ENCODE measurements at regions of chrX and their contacts with region 1.

Region 1: GRCh38 chrX:68699960-68700746 is 52.7 kb downstream of the STARD8 start:
- DNase-seq: no peak
- ATAC-seq: peak; percentile 25

Region 2: DNA sequence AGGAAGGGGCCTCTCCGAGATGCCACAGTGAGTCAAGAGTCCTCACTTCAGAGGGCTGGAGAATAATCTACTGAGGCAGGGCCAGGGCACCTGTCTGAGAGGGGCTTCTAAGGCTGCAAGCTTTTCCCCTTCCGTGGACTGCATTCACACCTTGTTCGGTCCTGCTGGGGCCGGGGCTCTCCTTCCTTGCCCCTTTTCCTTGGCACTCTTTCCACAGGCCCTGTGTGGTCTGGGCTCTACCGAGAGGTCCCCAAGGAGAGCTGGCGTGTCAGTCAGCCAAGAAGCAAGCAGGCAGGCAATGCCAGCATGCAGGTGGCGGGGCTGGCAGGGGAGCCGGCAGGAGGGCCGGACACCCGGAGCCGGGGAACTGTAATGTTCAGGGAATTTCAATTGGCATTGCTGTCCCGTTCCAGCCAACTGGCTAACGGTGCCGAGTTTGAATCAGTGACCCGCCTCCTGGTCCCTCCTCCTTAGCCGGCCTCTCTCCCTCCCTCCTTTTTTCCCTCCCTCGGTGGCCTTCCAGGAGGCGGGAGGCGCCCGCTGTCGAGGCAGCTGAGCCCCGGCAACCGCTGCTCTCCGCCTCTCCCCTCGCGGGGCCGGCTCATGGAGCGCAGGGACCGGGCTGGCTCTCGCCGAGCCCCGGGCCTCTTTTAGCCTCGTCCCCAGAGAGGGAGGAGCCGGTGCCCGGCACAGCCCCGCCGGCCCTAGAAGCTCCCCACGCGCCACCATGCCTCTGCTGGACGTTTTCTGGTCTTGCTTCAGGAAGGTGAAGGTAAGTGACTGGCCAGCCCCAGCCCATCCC is 52.8 kb before region 1 on chrX and contains the start of gene STARD8:
- intact Hi-C with region 1: loop called (anchors 10 kb)
- DNase-seq: peak; percentile 51
- ATAC-seq: peak; percentile 88
- total RNA-seq, gene STARD8: 10.5 TPM

Region 3: GRCh38 chrX:68833855-68834331 is 133.7 kb after region 1 on chrX:
- intact Hi-C with region 1: no loop called
- DNase-seq: no peak
- ATAC-seq: no peak

Measured in Right ventricle myocardium superior (tissue), 1 donor.